Activated CD4-positive, alpha-beta T cell treated with anti-CD3 and anti-CD28 coated beads for 36 hours (primary cell): ENCODE measurements at regions of chr10 and their contacts with region 1.

Region 1: DNA sequence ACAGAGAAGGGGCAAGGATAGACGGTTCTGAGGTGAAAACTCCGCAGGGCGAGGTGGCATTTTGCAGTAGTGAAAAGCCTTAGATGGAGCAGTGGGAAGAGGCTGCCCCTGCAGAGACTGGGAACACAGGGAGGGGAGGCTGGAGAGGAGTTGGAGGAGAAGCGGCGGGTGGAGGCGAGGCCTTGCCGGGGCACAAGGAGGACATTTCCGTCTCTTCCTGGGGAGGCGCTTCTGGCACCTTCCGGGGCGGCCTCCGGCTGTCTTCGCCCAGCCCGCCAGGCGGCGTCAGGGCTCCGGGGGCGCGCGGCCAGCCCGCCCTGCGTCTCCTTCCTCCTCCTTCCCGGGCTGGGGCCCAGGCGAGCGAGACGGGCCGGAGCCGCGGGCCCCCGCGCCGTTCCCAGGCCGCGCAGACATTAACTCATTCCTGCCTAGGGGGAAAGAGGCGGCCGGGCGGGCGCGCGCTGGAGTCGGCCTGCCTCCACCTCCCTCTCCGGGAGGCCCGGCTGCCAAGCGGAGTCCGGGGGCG is 42.7 kb downstream of the LDB3 start:
- DNase-seq: peak; percentile 91
- ATAC-seq: peak; percentile 93
- H3K4me3 Mint-ChIP-seq: peak overlapping the region; percentile 75
- H3K27ac Mint-ChIP-seq: peak overlapping the region; percentile 96
- H3K4me1 Mint-ChIP-seq: peaks cover 12% of the 10 kb centered on the region
- H3K27me3 Mint-ChIP-seq: no peaks in the 10 kb centered on the region

Region 2: GRCh38 chr10:86521678-86522509 is 189.2 kb before region 1 on chr10 and contains the start of gene WAPL:
- CTCF ChIA-PET with region 1: no interaction called
- POLR2A ChIA-PET with region 1: no interaction called
- intact Hi-C with region 1: loop called in 1 of 2 experiments (anchors 1 kb)
- DNase-seq: peak; percentile 97
- ATAC-seq: peak; percentile 97
- H3K4me3 Mint-ChIP-seq: peak within 1 kb of the TSS; percentile 82
- H3K27ac Mint-ChIP-seq: peak within 1 kb of the TSS; percentile 88
- H3K4me1 Mint-ChIP-seq: peaks cover 59% of the 10 kb centered on the region
- H3K27me3 Mint-ChIP-seq: no peaks in the 10 kb centered on the region
- total RNA-seq, gene WAPL: 37.4 to 43.2 TPM

Region 3: DNA sequence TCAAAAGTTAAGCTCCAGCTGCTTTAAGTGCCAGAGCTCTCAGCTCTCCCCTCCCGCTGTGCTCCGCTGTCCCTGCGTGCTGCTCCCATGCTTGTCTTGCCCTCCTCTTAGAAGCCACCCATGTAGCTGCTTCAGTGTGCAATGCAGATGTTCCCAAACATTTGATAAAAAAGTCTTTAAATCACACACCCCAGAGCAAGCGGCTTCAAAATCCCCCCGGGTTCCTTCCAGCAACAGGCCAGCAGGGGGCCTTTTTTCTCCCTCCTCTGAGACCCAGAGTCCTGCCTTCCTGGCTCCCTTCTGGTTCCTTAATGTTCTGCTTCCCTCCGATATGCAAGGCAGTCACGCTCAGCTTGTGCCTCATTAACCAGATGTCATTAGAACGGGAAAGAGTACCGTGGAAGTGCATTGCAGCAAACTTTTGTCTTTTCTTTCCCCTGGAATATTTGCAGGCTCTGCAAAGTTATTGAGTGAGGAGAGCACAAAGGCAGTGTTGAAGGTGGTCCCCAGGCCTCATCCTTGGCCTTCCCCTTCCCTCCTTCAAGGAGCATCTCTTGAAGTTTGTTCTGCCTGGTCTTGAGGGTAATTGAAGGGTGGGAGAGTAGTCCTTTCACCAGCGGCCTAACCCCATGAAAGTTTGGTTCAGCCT is 17.2 kb before region 1 on chr10:
- CTCF ChIA-PET with region 1: interaction called, 22 read pairs
- POLR2A ChIA-PET with region 1: interaction called, 3 read pairs
- intact Hi-C with region 1: no loop called
- DNase-seq: peak; percentile 60
- ATAC-seq: peak; percentile 55
- H3K4me3 Mint-ChIP-seq: no peak overlapping the region
- H3K27ac Mint-ChIP-seq: no peak overlapping the region
- H3K4me1 Mint-ChIP-seq: no peaks in the 10 kb centered on the region
- H3K27me3 Mint-ChIP-seq: no peaks in the 10 kb centered on the region

Region 4: DNA sequence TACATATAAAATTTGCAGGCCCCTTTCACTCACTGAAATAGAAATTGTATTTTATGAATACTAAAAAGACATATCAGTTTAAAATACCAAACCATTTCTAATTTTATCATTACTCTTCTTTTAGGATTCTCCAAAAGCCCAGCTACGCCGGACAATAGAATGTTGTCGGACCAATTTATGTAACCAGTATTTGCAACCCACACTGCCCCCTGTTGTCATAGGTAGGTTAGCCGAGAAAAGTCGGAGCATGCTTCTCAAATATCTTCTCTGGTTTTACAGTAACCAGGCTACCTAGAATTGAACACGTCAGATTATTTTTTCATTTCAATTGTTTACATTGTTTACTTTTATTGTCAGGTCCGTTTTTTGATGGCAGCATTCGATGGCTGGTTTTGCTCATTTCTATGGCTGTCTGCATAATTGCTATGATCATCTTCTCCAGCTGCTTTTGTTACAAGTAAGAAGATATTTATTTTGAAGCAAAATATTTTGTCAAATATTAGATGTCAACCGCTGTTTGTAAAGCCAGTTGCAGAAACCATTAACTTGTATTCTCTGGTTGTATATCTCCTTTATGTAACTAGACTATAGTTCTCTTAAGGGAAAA is 188.7 kb after region 1 on chr10:
- CTCF ChIA-PET with region 1: no interaction called
- POLR2A ChIA-PET with region 1: interaction called, 4 read pairs
- intact Hi-C with region 1: loop called (anchors 1 to 5 kb)
- DNase-seq: peak; percentile 60
- ATAC-seq: peak; percentile 44
- H3K4me3 Mint-ChIP-seq: no peak overlapping the region
- H3K27ac Mint-ChIP-seq: no peak overlapping the region
- H3K4me1 Mint-ChIP-seq: peaks cover 3% of the 10 kb centered on the region
- H3K27me3 Mint-ChIP-seq: no peaks in the 10 kb centered on the region

Region 5: DNA sequence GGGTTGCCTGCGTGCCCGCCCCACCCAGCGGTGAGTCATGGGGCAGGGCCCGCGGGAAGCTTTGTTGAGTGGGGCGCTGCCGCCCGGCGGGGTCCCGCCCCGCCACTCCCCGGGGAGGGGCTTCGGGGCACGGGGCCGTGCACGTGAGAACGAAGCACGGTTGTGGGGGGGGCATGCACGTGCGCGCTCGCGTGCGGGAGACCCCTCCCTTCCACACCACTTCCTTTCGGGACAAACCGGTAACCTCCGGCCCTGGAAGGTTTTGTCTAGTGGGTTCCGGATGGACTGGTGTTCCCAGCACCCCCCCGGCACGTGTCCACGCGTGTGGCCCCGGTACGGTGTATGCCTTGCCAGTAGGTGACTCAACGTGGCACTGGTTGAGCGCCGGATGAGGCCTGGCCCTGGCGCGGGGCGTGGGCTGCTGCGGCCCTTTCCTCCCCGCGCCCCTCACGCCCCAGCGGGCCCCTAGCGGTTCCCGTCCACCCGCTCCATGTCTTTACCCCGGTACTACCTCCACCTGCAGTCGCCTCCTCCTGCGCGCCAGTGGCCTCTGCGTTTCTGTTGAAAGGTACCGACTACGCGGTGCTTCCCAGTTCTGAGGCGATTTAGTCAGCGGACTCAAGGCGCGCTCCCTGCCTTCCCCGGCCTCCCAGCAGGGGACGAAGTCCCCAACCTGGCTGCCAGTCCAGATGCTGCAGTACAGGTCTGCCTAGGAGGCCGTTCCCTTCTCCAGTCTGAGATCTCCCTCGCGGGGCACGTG is 260.4 kb after region 1 on chr10:
- CTCF ChIA-PET with region 1: interaction called, 7 read pairs
- POLR2A ChIA-PET with region 1: no interaction called
- intact Hi-C with region 1: loop called in 1 of 2 experiments (anchors 5 kb)
- DNase-seq: peak; percentile 88
- ATAC-seq: peak; percentile 78
- H3K4me3 Mint-ChIP-seq: peak overlapping the region; percentile 70
- H3K27ac Mint-ChIP-seq: peak overlapping the region; percentile 80
- H3K4me1 Mint-ChIP-seq: peaks cover 26% of the 10 kb centered on the region
- H3K27me3 Mint-ChIP-seq: peaks cover 10% of the 10 kb centered on the region

Region 6: GRCh38 chr10:87504640-87505365 is 793.8 kb after region 1 on chr10 and contains the start of gene MINPP1:
- CTCF ChIA-PET with region 1: no interaction called
- POLR2A ChIA-PET with region 1: no interaction called
- intact Hi-C with region 1: loop called in 1 of 2 experiments (anchors 5 kb)
- DNase-seq: peak; percentile 94
- ATAC-seq: peak; percentile 92
- H3K4me3 Mint-ChIP-seq: peak within 1 kb of the TSS; percentile 92
- H3K27ac Mint-ChIP-seq: peak within 1 kb of the TSS; percentile 94
- H3K4me1 Mint-ChIP-seq: peaks cover 40% of the 10 kb centered on the region
- H3K27me3 Mint-ChIP-seq: no peaks in the 10 kb centered on the region
- total RNA-seq, gene MINPP1: 8.3 TPM